ENCODE measurements at regions of chr2 and their contacts with region 1.

Region 1: GRCh38 chr2:100857915-100858314 is 38.0 kb downstream of the NPAS2 start:
- DNase-seq: no peak
- ATAC-seq: no peak
- H3K4me3 Mint-ChIP-seq: no peak overlapping the region
- H3K27ac Mint-ChIP-seq: no peak overlapping the region
- H3K4me1 Mint-ChIP-seq: no peaks in the 10 kb centered on the region
- H3K27me3 Mint-ChIP-seq: peaks cover 8% of the 10 kb centered on the region
- CTCF ChIP-seq: no peak

Region 2: DNA sequence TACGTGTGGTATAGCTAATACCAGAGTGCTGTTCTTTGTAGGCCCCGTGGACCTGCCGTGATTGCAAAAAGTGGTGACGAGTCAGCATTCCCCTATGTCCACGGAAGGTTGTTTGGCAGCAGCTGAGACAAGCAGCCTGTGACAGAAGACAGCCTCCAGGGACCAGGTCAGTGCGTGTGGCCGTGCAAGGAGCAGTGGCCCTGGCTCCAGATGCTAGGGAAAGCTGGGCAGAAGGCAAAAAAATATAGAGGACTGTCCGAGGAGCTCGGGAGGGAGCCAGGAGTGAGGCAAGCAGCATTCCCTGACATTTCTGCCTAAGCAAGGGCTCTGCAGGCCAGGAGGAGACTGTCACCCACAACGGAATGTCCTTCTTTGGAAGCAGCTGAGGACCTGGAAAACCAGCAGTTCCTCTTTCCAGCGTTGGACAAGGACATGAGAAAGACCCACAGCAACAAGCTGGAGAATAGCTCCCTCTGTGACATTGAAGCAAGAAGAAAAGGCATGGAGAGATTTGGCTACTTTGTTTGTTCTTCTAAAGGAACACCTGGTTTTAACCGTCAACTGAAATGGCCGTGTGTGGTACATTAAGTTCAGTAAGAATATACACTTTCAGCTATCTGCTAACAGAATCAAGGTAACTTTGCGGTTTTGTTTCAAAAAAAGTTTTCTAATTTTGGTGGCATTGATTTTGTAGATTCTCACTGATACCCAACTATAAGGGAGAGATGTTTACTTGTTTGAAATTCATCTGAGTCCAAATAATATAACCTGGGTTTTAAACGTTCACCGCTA is 20.3 kb after region 1 on chr2:
- CTCF ChIA-PET with region 1: no interaction called
- POLR2A ChIA-PET with region 1: interaction called, 12 read pairs
- intact Hi-C with region 1: no loop called
- DNase-seq: no peak
- ATAC-seq: no peak
- H3K4me3 Mint-ChIP-seq: no peak overlapping the region
- H3K27ac Mint-ChIP-seq: no peak overlapping the region
- H3K4me1 Mint-ChIP-seq: no peaks in the 10 kb centered on the region
- H3K27me3 Mint-ChIP-seq: peaks cover 7% of the 10 kb centered on the region
- CTCF ChIP-seq: no peak

Region 3: DNA sequence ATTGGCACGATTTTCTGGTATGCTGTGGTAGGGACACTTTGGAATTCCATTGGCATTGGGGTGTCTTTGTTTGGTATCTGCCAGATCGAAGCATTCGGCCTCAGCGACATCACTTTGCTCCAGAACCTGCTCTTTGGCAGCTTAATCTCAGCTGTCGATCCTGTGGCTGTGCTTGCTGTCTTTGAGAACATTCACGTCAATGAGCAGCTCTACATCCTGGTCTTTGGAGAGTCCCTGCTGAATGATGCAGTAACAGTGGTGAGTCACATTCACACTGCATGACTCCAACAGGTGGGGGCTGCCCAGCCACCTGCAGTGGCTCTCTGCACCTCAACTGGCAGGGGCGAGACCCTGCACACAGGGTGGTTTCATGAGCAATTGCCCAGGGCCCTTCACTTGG is 1799.9 kb after region 1 on chr2:
- CTCF ChIA-PET with region 1: no interaction called
- POLR2A ChIA-PET with region 1: no interaction called
- intact Hi-C with region 1: no loop called
- DNase-seq: no peak
- ATAC-seq: peak; percentile 65
- H3K4me3 Mint-ChIP-seq: no peak overlapping the region
- H3K27ac Mint-ChIP-seq: no peak overlapping the region
- H3K4me1 Mint-ChIP-seq: no peaks in the 10 kb centered on the region
- H3K27me3 Mint-ChIP-seq: peaks cover 9% of the 10 kb centered on the region
- CTCF ChIP-seq: no peak

Measured in activated B cell treated with CpG ODN at 0.5 μM for 24 hours (primary cell).